WTC11 (cell line): ENCODE measurements at regions of chr20 and their contacts with region 1.

Region 1: GRCh38 chr20:6265204-6265904 is 142.5 kb upstream of the FERMT1 start:
- DNase-seq: no peak
- ATAC-seq: 0 out of 2 replicates have a peak, but pooled peaks have one; percentile 14
- H3K4me3 Mint-ChIP-seq: no peak overlapping the region
- H3K27ac Mint-ChIP-seq: no peak overlapping the region
- H3K4me1 Mint-ChIP-seq: peaks cover 9% of the 10 kb centered on the region
- H3K27me3 Mint-ChIP-seq: no peaks in the 10 kb centered on the region
- CTCF ChIP-seq: no peak

Region 2: DNA sequence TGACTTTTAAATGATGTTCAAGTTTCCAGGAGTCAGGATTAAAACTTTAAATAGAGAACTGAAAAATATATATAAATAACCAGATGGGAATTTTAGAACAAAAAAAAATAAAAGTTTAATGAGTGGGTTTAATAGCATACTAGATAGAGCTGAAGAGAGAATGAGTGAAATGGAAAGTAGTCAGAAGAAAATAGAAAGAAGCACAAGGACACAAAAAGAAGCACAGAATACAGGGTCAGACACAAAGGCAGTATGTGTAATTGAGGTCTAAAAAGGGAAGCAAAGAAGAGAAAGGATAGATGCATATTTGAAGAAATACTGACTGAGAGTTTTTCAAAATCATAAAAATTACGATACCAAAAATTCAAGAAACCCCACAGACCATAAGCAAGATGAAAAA is 17.3 kb after region 1 on chr20:
- CTCF ChIA-PET with region 1: no interaction called
- POLR2A ChIA-PET with region 1: no interaction called
- DNase-seq: no peak
- ATAC-seq: no peak
- H3K4me3 Mint-ChIP-seq: no peak overlapping the region
- H3K27ac Mint-ChIP-seq: no peak overlapping the region
- H3K4me1 Mint-ChIP-seq: no peaks in the 10 kb centered on the region
- H3K27me3 Mint-ChIP-seq: peaks cover 4% of the 10 kb centered on the region; the same call in 1 of the 2 replicates
- CTCF ChIP-seq: no peak

Region 3: GRCh38 chr20:6347916-6348315 is 82.6 kb after region 1 on chr20:
- CTCF ChIA-PET with region 1: no interaction called
- POLR2A ChIA-PET with region 1: no interaction called
- DNase-seq: no peak
- ATAC-seq: no peak
- H3K4me3 Mint-ChIP-seq: no peak overlapping the region
- H3K27ac Mint-ChIP-seq: no peak overlapping the region
- H3K4me1 Mint-ChIP-seq: no peaks in the 10 kb centered on the region
- H3K27me3 Mint-ChIP-seq: no peaks in the 10 kb centered on the region
- CTCF ChIP-seq: no peak

Region 4: DNA sequence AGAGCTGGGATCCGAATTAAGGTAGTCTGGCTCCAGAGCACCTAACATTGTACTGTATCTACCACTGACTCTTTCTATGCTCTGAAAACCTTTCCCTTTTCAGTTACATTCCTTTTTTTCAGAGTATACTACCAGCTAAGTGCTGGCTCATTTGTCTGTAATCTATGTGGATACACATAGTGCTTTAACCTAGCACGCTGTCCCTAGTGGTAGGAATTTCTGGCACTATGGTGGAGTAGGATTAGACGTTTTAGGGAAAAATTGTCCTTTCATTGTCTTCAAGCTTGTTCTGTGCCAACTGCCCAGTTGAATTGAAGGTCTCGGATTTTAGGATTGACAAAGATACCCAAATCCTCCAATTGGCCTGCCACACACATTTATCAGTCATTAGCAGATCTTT is 116.5 kb after region 1 on chr20:
- CTCF ChIA-PET with region 1: interaction called, 15 read pairs
- POLR2A ChIA-PET with region 1: no interaction called
- DNase-seq: no peak
- ATAC-seq: peak; percentile 99
- H3K4me3 Mint-ChIP-seq: no peak overlapping the region
- H3K27ac Mint-ChIP-seq: peak overlapping the region; percentile 39; the same call in 1 of the 2 replicates
- H3K4me1 Mint-ChIP-seq: peaks cover 6% of the 10 kb centered on the region
- H3K27me3 Mint-ChIP-seq: no peaks in the 10 kb centered on the region
- CTCF ChIP-seq: peak; percentile 48

Region 5: DNA sequence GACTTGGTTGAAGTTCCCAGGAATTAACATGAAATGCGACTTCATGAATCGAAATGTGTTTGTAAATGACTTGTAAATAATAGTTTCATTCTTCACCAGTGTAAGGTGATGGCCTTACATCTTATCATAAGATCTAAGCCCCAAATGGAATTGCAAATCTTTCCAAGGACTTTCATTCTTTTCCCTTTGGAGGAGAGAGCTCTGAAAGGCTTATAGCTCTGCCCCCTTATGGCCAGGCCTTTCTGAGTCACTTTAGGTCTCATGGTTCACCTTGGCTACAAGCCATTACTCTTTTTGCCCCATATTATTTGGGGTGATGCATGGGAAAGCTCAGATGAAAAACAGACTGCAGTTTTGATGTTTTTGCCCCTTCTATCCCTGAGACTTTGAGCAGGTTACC is 293.0 kb after region 1 on chr20:
- CTCF ChIA-PET with region 1: interaction called, 15 read pairs
- POLR2A ChIA-PET with region 1: no interaction called
- DNase-seq: no peak
- ATAC-seq: peak; percentile 81
- H3K4me3 Mint-ChIP-seq: no peak overlapping the region
- H3K27ac Mint-ChIP-seq: no peak overlapping the region
- H3K4me1 Mint-ChIP-seq: no peaks in the 10 kb centered on the region
- H3K27me3 Mint-ChIP-seq: no peaks in the 10 kb centered on the region
- CTCF ChIP-seq: no peak

Region 6: GRCh38 chr20:6583134-6583738 is 317.9 kb after region 1 on chr20:
- CTCF ChIA-PET with region 1: interaction called, 11 read pairs
- POLR2A ChIA-PET with region 1: no interaction called
- DNase-seq: peak; percentile 36
- ATAC-seq: peak; percentile 95
- H3K4me3 Mint-ChIP-seq: no peak overlapping the region
- H3K27ac Mint-ChIP-seq: no peak overlapping the region
- H3K4me1 Mint-ChIP-seq: peaks cover 7% of the 10 kb centered on the region; the same call in 1 of the 2 replicates
- H3K27me3 Mint-ChIP-seq: no peaks in the 10 kb centered on the region
- CTCF ChIP-seq: peak; percentile 59